Activated naive CD4-positive, alpha-beta T cell treated with anti-CD3 and anti-CD28 coated beads for 36 hours (primary cell): ENCODE measurements at regions of chr15 and their contacts with region 1.

Region 1: GRCh38 chr15:52528991-52529926 is 579 bp upstream of the MYO5A start:
- DNase-seq: peak; percentile 81
- H3K4me3 Mint-ChIP-seq: peak overlapping the region; percentile 74
- H3K27ac Mint-ChIP-seq: peak overlapping the region; percentile 47
- H3K4me1 Mint-ChIP-seq: peaks cover 13% of the 10 kb centered on the region
- H3K27me3 Mint-ChIP-seq: no peaks in the 10 kb centered on the region

Region 2: GRCh38 chr15:52568601-52569256 is 39.5 kb after region 1 on chr15 and contains the start of gene ARPP19:
- CTCF ChIA-PET with region 1: no interaction called
- intact Hi-C with region 1: loop called (anchors 1 kb)
- DNase-seq: peak; percentile 90
- H3K4me3 Mint-ChIP-seq: peak within 1 kb of the TSS; percentile 86
- H3K27ac Mint-ChIP-seq: peak within 1 kb of the TSS; percentile 98
- H3K4me1 Mint-ChIP-seq: peaks cover 23% of the 10 kb centered on the region
- H3K27me3 Mint-ChIP-seq: no peaks in the 10 kb centered on the region
- total RNA-seq, gene ARPP19: 130 to 144 TPM

Region 3: DNA sequence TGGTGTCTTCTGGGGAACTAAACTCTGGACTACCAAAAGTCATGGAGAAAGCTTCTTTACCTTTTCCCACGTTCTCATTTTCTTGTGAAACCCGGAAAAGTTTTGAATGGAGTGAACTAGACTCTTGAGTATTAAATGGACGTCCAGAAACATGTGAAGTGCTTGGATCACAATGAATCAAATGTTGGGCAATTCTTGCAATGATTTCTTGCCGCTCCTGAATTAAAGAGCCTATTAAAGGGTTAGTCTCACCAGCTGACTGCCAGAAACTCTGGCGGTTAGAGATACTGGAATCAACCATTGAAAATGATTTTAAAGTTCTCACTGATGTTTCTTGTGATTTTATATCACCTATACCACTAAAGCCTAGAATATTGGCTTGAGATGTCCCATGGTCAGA is 80.3 kb after region 1 on chr15:
- CTCF ChIA-PET with region 1: no interaction called
- intact Hi-C with region 1: no loop called
- DNase-seq: no peak
- H3K4me3 Mint-ChIP-seq: no peak overlapping the region
- H3K27ac Mint-ChIP-seq: no peak overlapping the region
- H3K4me1 Mint-ChIP-seq: no peaks in the 10 kb centered on the region
- H3K27me3 Mint-ChIP-seq: no peaks in the 10 kb centered on the region

Region 4: DNA sequence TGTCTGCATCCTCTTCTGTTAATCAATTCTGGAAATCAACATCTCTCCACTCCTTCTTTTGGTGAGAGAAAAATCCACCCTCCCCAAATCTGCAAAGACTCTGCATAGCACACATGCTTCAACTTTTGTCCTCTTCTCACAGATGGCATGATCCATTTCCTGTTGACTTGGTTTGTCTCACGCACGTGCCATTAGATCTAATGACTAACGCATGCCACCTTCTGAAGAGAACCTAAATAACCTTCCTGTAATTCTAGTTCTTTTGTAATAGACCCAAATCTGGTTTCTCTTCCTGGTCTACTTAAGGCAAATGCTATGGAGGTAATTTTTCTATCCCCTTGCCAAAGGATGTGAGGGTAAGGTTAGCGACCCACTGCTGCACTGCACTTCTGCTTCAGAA is 200.9 kb after region 1 on chr15:
- CTCF ChIA-PET with region 1: interaction called, 4 read pairs
- intact Hi-C with region 1: loop called (anchors 1 kb)
- DNase-seq: peak; percentile 73
- H3K4me3 Mint-ChIP-seq: no peak overlapping the region
- H3K27ac Mint-ChIP-seq: peak overlapping the region; percentile 57
- H3K4me1 Mint-ChIP-seq: peaks cover 38% of the 10 kb centered on the region
- H3K27me3 Mint-ChIP-seq: no peaks in the 10 kb centered on the region